HepG2 (cell line): ENCODE measurements at regions of chr16 and their contacts with region 1.

Region 1: GRCh38 chr16:11757671-11758545 is 15.3 kb upstream of the TXNDC11 start:
- DNase-seq: peak; percentile 32
- ATAC-seq: peak; percentile 58
- H3K4me3 ChIP-seq: no peak overlapping the region
- H3K27ac ChIP-seq: peak overlapping the region; percentile 43
- H3K4me1 ChIP-seq: peaks cover 67% of the 10 kb centered on the region
- H3K27me3 ChIP-seq: no peaks in the 10 kb centered on the region
- CTCF ChIP-seq: no peak
- EP300 ChIP-seq: peak in 1 of 2 experiments; percentile 10; a peak in 1 of 4 replicates
- POLR2A ChIP-seq: no peak
- RAD21 ChIP-seq: no peak

Region 2: DNA sequence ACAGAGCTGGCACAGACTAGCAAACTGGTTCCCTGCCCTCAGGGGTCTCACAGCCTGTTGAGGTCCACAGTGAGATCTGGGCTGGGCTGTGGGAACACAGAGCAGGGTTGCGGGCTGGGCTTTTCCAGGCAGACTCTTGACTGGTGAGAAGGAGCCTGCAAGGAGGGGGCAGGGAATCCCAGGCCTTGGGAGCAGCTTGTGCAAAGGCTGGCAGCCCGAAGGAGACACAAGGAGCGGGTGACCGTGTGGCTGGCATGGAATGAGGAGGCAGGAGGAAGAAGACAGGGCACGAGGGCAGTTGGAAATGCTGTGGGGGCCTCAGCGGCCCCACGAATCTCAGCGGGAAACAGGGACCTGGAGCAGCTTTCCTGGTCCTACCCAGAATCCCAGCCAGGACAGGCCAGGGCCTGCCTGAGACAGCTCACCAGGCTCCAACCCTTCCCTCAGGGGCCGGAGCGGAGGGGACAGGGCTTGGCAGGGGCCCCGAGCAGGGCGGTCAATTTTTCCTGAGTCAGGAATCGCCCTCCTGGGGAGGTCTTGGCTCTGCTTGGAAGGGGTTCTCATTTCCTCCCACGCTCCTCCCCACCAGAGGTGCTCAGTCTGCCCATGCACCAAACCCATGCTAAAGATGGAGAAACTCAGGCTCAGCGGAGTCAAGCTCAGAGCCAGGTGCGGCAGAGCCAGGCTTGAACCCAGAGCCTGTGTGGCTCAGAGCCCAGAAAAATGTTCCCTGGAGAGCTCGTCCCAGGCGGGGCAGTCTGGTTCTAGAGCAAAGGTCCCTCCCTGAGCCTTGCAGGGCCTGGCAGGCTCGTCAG is 98.8 kb before region 1 on chr16:
- CTCF ChIA-PET with region 1: no interaction called
- POLR2A ChIA-PET with region 1: no interaction called
- in situ Hi-C with region 1: no loop called
- intact Hi-C with region 1: no loop called
- DNase-seq: no peak
- ATAC-seq: peak; percentile 46
- H3K4me3 ChIP-seq: no peak overlapping the region
- H3K27ac ChIP-seq: no peak overlapping the region
- H3K4me1 ChIP-seq: peaks cover 21% of the 10 kb centered on the region
- H3K27me3 ChIP-seq: peaks cover 6 to 54% of the 10 kb centered on the region in 2 experiments
- CTCF ChIP-seq: no peak
- EP300 ChIP-seq: no peak
- POLR2A ChIP-seq: no peak
- RAD21 ChIP-seq: no peak

Region 3: DNA sequence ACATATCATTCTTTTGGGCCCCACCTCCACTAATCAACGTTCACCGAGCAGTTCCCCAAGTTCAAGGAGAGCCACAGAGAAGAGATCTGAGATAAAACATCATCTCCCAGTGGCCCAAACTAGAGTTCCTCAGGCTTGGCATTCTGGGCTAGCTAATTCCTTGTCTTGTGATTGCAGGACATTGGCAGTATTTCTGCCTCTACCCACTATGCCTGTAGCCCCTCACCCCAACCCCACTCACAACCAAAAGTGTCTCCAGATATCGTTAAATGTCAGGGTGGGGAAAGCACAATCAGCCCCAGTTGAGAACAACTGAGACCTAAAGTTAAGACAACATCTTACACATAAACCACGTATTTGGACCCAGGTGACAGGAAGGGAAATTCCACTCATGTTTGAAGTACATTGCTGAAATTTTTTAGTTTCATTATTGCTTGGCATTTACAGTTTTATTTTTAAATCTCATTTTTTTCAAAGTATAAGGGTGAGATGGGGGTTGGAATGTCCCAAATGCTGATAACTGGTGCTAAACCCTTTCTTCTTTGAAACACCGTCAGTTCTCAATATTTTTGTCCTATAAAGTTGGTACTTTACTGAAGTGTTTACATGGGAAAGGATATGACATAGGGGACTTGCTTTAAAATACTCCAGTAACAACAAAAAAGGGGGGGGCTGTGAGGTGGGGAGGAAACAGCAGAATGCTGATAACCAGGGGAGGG is 25.6 kb after region 1 on chr16:
- CTCF ChIA-PET with region 1: no interaction called
- POLR2A ChIA-PET with region 1: no interaction called
- in situ Hi-C with region 1: no loop called
- intact Hi-C with region 1: loop called (anchors 2 kb)
- DNase-seq: no peak
- ATAC-seq: no peak
- H3K4me3 ChIP-seq: no peak overlapping the region
- H3K27ac ChIP-seq: peak overlapping the region; percentile 9
- H3K4me1 ChIP-seq: peaks cover 68% of the 10 kb centered on the region
- H3K27me3 ChIP-seq: no peaks in the 10 kb centered on the region
- CTCF ChIP-seq: no peak
- EP300 ChIP-seq: no peak
- POLR2A ChIP-seq: no peak
- RAD21 ChIP-seq: no peak

Region 4: DNA sequence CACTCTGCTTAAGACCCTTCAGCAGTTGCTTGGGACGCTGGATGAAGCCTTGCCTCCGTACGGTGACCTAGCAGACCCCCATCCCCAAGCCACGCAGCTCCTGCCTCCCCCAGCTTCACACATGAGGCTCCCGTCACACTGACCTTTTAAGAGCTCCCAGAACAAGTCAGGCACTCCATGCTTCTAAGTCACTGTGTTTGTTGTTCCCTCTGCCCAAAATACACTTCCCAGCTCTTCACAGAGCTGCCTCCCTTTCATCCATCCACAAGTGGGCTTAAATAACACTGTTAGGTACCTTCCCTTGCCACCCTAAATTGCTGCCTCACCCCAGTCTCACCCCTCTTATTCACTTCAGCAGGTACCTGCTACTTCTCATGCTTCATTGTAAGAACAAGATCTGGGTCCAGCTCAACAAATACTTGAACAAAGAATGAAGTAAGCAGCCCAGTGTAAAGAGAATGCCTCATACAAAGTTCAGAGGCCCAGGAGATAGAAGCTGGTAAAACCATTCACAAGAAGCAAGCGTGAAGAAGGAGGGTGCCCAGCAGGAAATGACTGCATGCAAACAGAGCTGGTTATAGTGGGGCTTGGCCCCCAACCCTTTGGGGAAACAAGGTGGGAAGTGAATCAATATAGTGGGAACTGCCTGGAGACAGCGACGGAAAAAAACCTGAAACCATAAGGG is 33.4 kb after region 1 on chr16:
- CTCF ChIA-PET with region 1: no interaction called
- POLR2A ChIA-PET with region 1: interaction called, 4 read pairs
- in situ Hi-C with region 1: no loop called
- intact Hi-C with region 1: loop called (anchors 1 kb)
- DNase-seq: peak; percentile 45
- ATAC-seq: peak; percentile 42
- H3K4me3 ChIP-seq: peak overlapping the region in 1 of 3 experiments; percentile 28; a peak in 3 of 6 replicates
- H3K27ac ChIP-seq: peak overlapping the region; percentile 52
- H3K4me1 ChIP-seq: peaks cover 98% of the 10 kb centered on the region
- H3K27me3 ChIP-seq: no peaks in the 10 kb centered on the region
- CTCF ChIP-seq: no peak
- EP300 ChIP-seq: 0 out of 4 replicates have a peak, but pooled peaks of 1 of the 2 experiments have one; percentile 19
- POLR2A ChIP-seq: no peak; a peak in 1 of 4 replicates
- RAD21 ChIP-seq: no peak

Region 5: GRCh38 chr16:11914210-11915113 is 156.6 kb after region 1 on chr16:
- CTCF ChIA-PET with region 1: no interaction called
- POLR2A ChIA-PET with region 1: no interaction called
- in situ Hi-C with region 1: no loop called
- intact Hi-C with region 1: no loop called
- DNase-seq: no peak
- ATAC-seq: no peak
- H3K4me3 ChIP-seq: peak overlapping the region; percentile 71 to 98 (median 97)
- H3K27ac ChIP-seq: peak overlapping the region; percentile 83
- H3K4me1 ChIP-seq: peaks cover 58% of the 10 kb centered on the region
- H3K27me3 ChIP-seq: no peaks in the 10 kb centered on the region; a peak in 1 of 5 replicates
- CTCF ChIP-seq: no peak
- EP300 ChIP-seq: no peak
- POLR2A ChIP-seq: peak in 1 of 2 experiments; percentile 21; a peak in 1 of 4 replicates
- RAD21 ChIP-seq: no peak

Region 6: DNA sequence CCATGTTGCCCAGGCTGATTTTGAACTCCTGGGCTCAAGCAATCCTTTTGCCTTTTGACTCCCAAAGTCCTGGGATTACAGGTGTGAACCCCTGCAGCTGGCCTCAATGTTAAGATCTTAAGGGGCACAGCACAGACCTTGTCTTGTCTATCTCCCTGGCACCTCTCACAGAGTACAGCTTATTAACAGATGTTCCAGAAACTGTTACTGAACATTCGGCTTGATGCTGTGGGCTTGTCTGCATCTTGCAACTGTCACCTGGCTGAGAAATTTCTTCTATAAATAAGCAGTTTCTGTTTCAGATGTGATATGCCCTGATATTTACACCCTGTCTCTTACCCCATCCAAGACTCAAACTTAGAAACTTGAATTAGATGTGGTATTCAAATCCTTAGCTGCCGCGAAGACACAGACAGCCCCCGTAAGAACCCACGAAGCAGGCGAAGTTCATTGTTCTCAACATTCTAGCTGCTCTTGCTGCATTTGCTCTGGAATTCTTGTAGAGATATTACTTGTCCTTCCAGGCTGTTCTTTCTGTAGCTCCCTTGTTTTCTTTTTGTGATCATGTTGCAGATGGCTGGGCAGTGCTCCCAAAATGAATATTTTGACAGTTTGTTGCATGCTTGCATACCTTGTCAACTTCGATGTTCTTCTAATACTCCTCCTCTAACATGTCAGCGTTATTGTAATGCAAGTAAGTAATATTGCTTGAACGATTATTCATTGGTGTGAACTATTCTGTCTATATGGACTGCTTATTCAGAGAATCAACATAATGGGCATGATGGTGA is 207.0 kb after region 1 on chr16 and contains the start of gene TNFRSF17:
- CTCF ChIA-PET with region 1: no interaction called
- POLR2A ChIA-PET with region 1: no interaction called
- in situ Hi-C with region 1: no loop called
- intact Hi-C with region 1: no loop called
- DNase-seq: no peak
- ATAC-seq: 0 out of 3 replicates have a peak, but pooled peaks have one; percentile 23
- H3K4me3 ChIP-seq: no peak within 1 kb of the TSS; a peak in 1 of 6 replicates
- H3K27ac ChIP-seq: no peak within 1 kb of the TSS
- H3K4me1 ChIP-seq: peaks cover 34% of the 10 kb centered on the region
- H3K27me3 ChIP-seq: peaks cover 4 to 19% of the 10 kb centered on the region in 2 experiments; a peak in 4 of 5 replicates
- CTCF ChIP-seq: no peak
- EP300 ChIP-seq: no peak
- POLR2A ChIP-seq: no peak
- RAD21 ChIP-seq: no peak
- total RNA-seq, gene TNFRSF17: not detected in 2 replicates